Endothelial cell of umbilical vein (primary cell): ENCODE measurements at regions of chr7 and their contacts with region 1.

Region 1: GRCh38 chr7:37181550-37181932 is 267.1 kb downstream of the ELMO1 start:
- DNase-seq: no peak
- H3K4me3 ChIP-seq: no peak overlapping the region
- H3K27ac ChIP-seq: no peak overlapping the region
- H3K4me1 ChIP-seq: no peaks in the 10 kb centered on the region
- H3K27me3 ChIP-seq: no peaks in the 10 kb centered on the region
- CTCF ChIP-seq: no peak
- POLR2A ChIP-seq: no peak

Region 2: DNA sequence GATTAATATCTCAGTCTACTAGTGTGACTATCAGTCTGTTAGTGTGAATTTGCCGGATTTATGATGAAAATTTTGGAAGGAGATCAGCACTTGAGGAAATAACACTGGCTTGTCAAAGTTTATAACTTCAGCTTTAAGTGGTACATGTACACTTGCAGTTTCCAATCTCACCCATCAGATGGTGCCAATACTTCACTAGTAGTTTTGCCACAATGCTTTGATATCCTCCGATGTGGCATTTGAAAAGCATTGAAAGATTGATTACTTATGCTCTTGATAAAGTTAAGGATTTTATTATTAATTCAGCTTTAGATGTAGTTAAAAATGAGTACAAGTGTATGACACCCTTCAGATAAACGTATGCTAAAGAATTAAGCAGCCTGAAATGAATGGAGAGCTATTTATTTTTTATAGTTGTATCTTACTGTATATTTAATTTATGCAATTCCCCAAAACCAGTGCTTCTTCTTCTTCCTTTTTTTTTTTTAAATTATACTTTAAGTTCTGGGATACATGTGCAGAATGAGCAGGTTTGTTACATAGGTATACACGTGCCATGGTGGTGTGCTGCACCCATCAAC is 693.7 kb before region 1 on chr7:
- CTCF ChIA-PET with region 1: interaction called, 103 read pairs
- POLR2A ChIA-PET with region 1: no interaction called
- dilution Hi-C with region 1: no loop called
- intact Hi-C with region 1: loop called (anchors 1 kb)
- DNase-seq: peak; percentile 70
- H3K4me3 ChIP-seq: no peak overlapping the region
- H3K27ac ChIP-seq: no peak overlapping the region
- H3K4me1 ChIP-seq: no peaks in the 10 kb centered on the region
- H3K27me3 ChIP-seq: peaks cover 8 to 25% of the 10 kb centered on the region in 2 experiments
- CTCF ChIP-seq: peak; percentile 38 to 53
- POLR2A ChIP-seq: no peak

Region 3: GRCh38 chr7:36967387-36967786 is 214.2 kb before region 1 on chr7:
- CTCF ChIA-PET with region 1: interaction called, 366 read pairs
- POLR2A ChIA-PET with region 1: interaction called, 3 read pairs
- dilution Hi-C with region 1: no loop called
- intact Hi-C with region 1: loop called (anchors 1 kb)
- DNase-seq: peak; percentile 72
- H3K4me3 ChIP-seq: no peak overlapping the region
- H3K27ac ChIP-seq: no peak overlapping the region
- H3K4me1 ChIP-seq: peaks cover 19% of the 10 kb centered on the region
- H3K27me3 ChIP-seq: no peaks in the 10 kb centered on the region
- CTCF ChIP-seq: peak; percentile 78 to 86
- POLR2A ChIP-seq: no peak

Region 4: GRCh38 chr7:36994456-36995112 is 187.0 kb before region 1 on chr7:
- CTCF ChIA-PET with region 1: interaction called, 374 read pairs
- POLR2A ChIA-PET with region 1: no interaction called
- dilution Hi-C with region 1: loop called (anchors 25 kb)
- intact Hi-C with region 1: no loop called
- DNase-seq: no peak
- H3K4me3 ChIP-seq: no peak overlapping the region
- H3K27ac ChIP-seq: no peak overlapping the region
- H3K4me1 ChIP-seq: no peaks in the 10 kb centered on the region
- H3K27me3 ChIP-seq: no peaks in the 10 kb centered on the region
- CTCF ChIP-seq: no peak
- POLR2A ChIP-seq: no peak

Region 5: GRCh38 chr7:37083311-37084096 is 98.0 kb before region 1 on chr7:
- CTCF ChIA-PET with region 1: interaction called, 10 read pairs
- POLR2A ChIA-PET with region 1: no interaction called
- dilution Hi-C with region 1: no loop called
- intact Hi-C with region 1: no loop called
- DNase-seq: no peak
- H3K4me3 ChIP-seq: no peak overlapping the region
- H3K27ac ChIP-seq: no peak overlapping the region
- H3K4me1 ChIP-seq: no peaks in the 10 kb centered on the region
- H3K27me3 ChIP-seq: no peaks in the 10 kb centered on the region
- CTCF ChIP-seq: no peak
- POLR2A ChIP-seq: no peak